Activated naive CD4-positive, alpha-beta T cell treated with anti-CD3 and anti-CD28 coated beads for 36 hours (primary cell): ENCODE measurements at regions of chr6 and their contacts with region 1.

Region 1: GRCh38 chr6:139134817-139135581 is at the start of gene HECA:
- DNase-seq: peak; percentile 99
- H3K4me3 Mint-ChIP-seq: peak within 1 kb of the TSS; percentile 95
- H3K27ac Mint-ChIP-seq: peak within 1 kb of the TSS; percentile 99
- H3K4me1 Mint-ChIP-seq: peaks cover 49% of the 10 kb centered on the region
- H3K27me3 Mint-ChIP-seq: no peaks in the 10 kb centered on the region
- total RNA-seq, gene HECA: 61.1 to 61.2 TPM

Region 2: GRCh38 chr6:137866914-137867684 is 1267.9 kb before region 1 on chr6 and contains the start of gene TNFAIP3:
- CTCF ChIA-PET with region 1: no interaction called
- intact Hi-C with region 1: loop called (anchors 5 kb)
- DNase-seq: peak; percentile 97
- H3K4me3 Mint-ChIP-seq: peak within 1 kb of the TSS; percentile 89
- H3K27ac Mint-ChIP-seq: peak within 1 kb of the TSS; percentile 99
- H3K4me1 Mint-ChIP-seq: peaks cover 32% of the 10 kb centered on the region
- H3K27me3 Mint-ChIP-seq: no peaks in the 10 kb centered on the region
- total RNA-seq, gene TNFAIP3: 289 to 294 TPM

Region 3: DNA sequence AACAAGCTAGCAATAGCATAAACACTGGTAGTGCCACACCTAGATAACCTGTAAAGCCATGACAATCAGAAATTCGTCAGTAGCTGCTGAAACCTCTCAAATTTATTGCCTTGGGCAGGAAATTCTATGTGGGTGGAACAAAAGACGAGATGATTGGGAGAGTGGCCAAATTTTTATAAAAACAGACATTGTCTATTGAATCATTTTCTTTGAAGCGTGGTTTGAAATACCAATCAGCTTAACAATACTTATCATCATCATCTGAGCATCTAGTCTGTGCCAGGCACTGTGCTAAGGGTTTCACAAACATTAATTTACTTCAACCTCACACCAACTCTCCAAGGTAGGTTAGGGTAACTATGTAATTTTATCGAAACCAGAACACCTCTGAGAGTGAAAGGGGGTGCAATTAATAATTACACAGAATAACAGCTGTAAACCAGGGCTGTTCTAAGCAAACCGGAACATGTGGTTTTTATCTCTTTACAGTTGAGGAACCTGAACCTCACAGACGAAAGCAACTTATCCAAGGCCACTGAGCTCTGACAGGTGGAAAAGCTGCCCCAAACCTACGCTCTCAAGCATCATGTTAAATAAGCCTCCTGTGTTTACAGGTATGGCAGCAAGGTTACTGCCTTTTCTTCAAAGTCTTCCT is 679.1 kb before region 1 on chr6:
- CTCF ChIA-PET with region 1: no interaction called
- intact Hi-C with region 1: loop called (anchors 10 kb)
- DNase-seq: peak; percentile 16
- H3K4me3 Mint-ChIP-seq: peak overlapping the region; percentile 9
- H3K27ac Mint-ChIP-seq: peak overlapping the region; percentile 62
- H3K4me1 Mint-ChIP-seq: peaks cover 28% of the 10 kb centered on the region
- H3K27me3 Mint-ChIP-seq: no peaks in the 10 kb centered on the region

Region 4: GRCh38 chr6:138817822-138818308 is 317.1 kb before region 1 on chr6:
- CTCF ChIA-PET with region 1: interaction called, 3 read pairs
- intact Hi-C with region 1: loop called (anchors 1 kb)
- DNase-seq: peak; percentile 8
- H3K4me3 Mint-ChIP-seq: no peak overlapping the region
- H3K27ac Mint-ChIP-seq: no peak overlapping the region
- H3K4me1 Mint-ChIP-seq: peaks cover 20% of the 10 kb centered on the region
- H3K27me3 Mint-ChIP-seq: no peaks in the 10 kb centered on the region

Region 5: DNA sequence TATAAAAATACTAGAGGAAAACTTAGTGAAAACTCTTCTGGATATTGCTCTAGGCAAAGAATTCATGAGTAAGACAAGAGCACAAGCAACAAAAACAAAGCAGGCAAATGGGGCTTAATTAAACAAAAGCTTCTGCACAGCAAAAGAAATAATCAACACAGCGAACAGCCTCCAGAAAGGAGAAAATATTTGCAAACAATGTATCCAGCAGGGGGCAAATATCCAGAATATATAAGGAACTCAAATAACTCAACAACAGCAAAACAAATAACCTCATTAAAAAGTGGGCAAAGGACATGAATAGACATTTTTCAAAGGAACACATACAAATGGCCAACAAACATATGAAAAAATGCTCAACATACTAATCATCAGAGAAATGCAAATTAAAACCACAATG is 17.3 kb before region 1 on chr6:
- CTCF ChIA-PET with region 1: interaction called, 3 read pairs
- intact Hi-C with region 1: loop called (anchors 1 kb)
- DNase-seq: no peak
- H3K4me3 Mint-ChIP-seq: no peak overlapping the region
- H3K27ac Mint-ChIP-seq: peak overlapping the region; percentile 25
- H3K4me1 Mint-ChIP-seq: peaks cover 48% of the 10 kb centered on the region
- H3K27me3 Mint-ChIP-seq: no peaks in the 10 kb centered on the region

Region 6: GRCh38 chr6:139153855-139154254 is 18.9 kb after region 1 on chr6:
- CTCF ChIA-PET with region 1: interaction called, 15 read pairs
- intact Hi-C with region 1: loop called (anchors 1 kb)
- DNase-seq: no peak
- H3K4me3 Mint-ChIP-seq: no peak overlapping the region
- H3K27ac Mint-ChIP-seq: peak overlapping the region; percentile 89
- H3K4me1 Mint-ChIP-seq: peaks cover 81% of the 10 kb centered on the region
- H3K27me3 Mint-ChIP-seq: no peaks in the 10 kb centered on the region

Region 7: GRCh38 chr6:139173172-139173571 is 38.2 kb after region 1 on chr6:
- CTCF ChIA-PET with region 1: interaction called, 8 read pairs
- intact Hi-C with region 1: loop called (anchors 1 kb)
- DNase-seq: peak; percentile 46
- H3K4me3 Mint-ChIP-seq: no peak overlapping the region
- H3K27ac Mint-ChIP-seq: peak overlapping the region; percentile 85
- H3K4me1 Mint-ChIP-seq: peaks cover 88% of the 10 kb centered on the region
- H3K27me3 Mint-ChIP-seq: no peaks in the 10 kb centered on the region

Region 8: DNA sequence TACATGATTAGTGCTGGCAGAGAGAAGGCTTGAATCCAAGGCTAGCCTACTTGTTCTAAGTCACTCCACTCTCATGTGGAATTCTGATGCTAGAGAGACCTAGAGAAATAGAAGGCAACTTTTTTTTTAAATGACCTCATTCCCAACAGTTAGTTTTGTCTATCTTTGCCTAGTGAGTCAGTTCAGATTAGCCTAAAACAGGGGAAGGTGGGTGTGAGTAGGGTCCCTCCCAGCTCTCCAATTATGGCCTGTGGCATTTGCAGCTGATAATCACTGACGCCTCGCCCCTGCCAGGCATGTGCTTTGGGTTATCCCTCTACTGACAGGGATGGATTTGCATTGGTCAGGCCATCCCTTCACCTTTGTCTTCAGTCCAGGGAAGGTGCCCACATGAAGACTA is 143.2 kb after region 1 on chr6:
- CTCF ChIA-PET with region 1: no interaction called
- intact Hi-C with region 1: no loop called
- DNase-seq: no peak
- H3K4me3 Mint-ChIP-seq: no peak overlapping the region
- H3K27ac Mint-ChIP-seq: no peak overlapping the region
- H3K4me1 Mint-ChIP-seq: peaks cover 27% of the 10 kb centered on the region
- H3K27me3 Mint-ChIP-seq: no peaks in the 10 kb centered on the region